B cell (primary cell): ENCODE measurements at regions of chr1 and their contacts with region 1.

Region 1: DNA sequence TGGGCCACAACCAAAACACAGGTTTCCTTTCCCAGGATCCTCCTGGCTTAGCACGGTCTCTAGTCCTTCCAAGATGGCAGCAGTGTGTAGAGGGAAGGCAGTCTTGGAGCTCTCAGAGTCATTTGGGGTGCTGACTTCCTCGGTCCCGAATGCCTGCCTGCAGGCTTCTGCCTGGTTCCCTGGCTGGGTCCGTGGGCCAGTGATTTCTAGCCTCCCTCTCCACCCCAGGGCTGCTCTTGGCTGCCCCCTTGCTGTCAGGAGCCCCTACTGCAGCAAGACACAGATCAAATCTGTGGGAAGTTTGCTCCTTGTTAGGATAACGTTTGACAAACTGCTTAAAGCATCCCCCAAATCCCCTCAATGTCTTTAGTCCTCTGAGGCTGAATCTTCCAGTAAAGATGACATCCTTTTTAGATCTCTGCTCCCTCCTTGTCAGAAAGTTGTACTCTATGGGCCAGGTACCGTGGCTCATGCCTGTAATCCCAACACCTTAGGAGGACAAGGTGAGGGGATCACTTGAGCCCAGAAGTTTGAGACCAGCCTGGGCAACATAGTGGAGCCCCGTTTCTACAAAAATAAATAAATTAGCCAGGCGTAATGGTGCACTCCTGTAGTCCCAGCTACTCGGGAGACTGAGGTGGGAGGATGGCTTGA is 272.5 kb downstream of the RRAGC start:
- DNase-seq: peak; percentile 68
- ATAC-seq: peak; percentile 91
- H3K4me3 ChIP-seq: no peak overlapping the region
- H3K4me3 Mint-ChIP-seq: peak overlapping the region; percentile 52
- H3K27ac ChIP-seq: no peak overlapping the region
- H3K27ac Mint-ChIP-seq: no peak overlapping the region
- H3K4me1 ChIP-seq: peaks cover 0 to 6% of the 10 kb centered on the region in 2 donors
- H3K4me1 Mint-ChIP-seq: peaks cover 14% of the 10 kb centered on the region
- H3K27me3 ChIP-seq: no peaks in the 10 kb centered on the region
- H3K27me3 Mint-ChIP-seq: peaks cover 12% of the 10 kb centered on the region
- CTCF ChIP-seq: peak; percentile 90

Region 2: GRCh38 chr1:38046884-38047602 is 540.1 kb before region 1 on chr1:
- CTCF ChIA-PET with region 1: no interaction called
- POLR2A ChIA-PET with region 1: no interaction called
- intact Hi-C with region 1: loop called (anchors 2 kb)
- DNase-seq: peak; percentile 86
- ATAC-seq: peak; percentile 89
- H3K4me3 ChIP-seq: peak overlapping the region in 4 of 5 experiments; percentile 43 to 68 (median 60)
- H3K4me3 Mint-ChIP-seq: peak overlapping the region; percentile 90
- H3K27ac ChIP-seq: no peak overlapping the region
- H3K27ac Mint-ChIP-seq: peak overlapping the region; percentile 53
- H3K4me1 ChIP-seq: peaks cover 24% of the 10 kb centered on the region in 2 donors
- H3K4me1 Mint-ChIP-seq: peaks cover 22% of the 10 kb centered on the region
- H3K27me3 ChIP-seq: peaks cover 0 to 44% (median 30%) of the 10 kb centered on the region in 4 experiments
- H3K27me3 Mint-ChIP-seq: peaks cover 24% of the 10 kb centered on the region
- CTCF ChIP-seq: no peak

Region 3: DNA sequence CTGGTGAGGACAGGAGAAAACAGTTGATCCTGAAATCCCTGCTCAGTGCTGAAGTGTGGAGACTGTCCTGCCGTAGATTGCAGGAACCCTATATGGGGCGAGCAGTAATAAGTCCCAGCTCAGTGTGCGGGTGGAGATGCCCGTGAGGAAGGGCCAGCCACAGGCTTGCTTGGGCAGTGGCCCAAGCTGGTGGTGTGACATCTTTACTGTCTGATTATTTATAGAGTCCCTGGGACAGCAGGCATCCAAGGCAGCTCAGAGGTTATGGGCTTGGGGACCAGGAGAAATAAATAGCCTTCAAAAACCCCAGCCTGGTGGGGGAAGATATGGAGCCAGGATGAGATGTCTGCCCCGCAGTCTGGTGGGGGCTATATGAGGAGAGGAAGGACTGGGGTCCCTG is 369.8 kb before region 1 on chr1:
- CTCF ChIA-PET with region 1: no interaction called
- POLR2A ChIA-PET with region 1: no interaction called
- intact Hi-C with region 1: loop called (anchors 5 kb)
- DNase-seq: no peak
- ATAC-seq: no peak
- H3K4me3 ChIP-seq: no peak overlapping the region
- H3K4me3 Mint-ChIP-seq: no peak overlapping the region
- H3K27ac ChIP-seq: no peak overlapping the region
- H3K27ac Mint-ChIP-seq: no peak overlapping the region
- H3K4me1 ChIP-seq: peaks cover 4 to 10% of the 10 kb centered on the region in 2 donors
- H3K4me1 Mint-ChIP-seq: peaks cover 13% of the 10 kb centered on the region
- H3K27me3 ChIP-seq: peaks cover 0 to 17% (median 2%) of the 10 kb centered on the region in 4 experiments
- H3K27me3 Mint-ChIP-seq: peaks cover 55% of the 10 kb centered on the region
- CTCF ChIP-seq: no peak

Region 4: GRCh38 chr1:38360807-38361206 is 226.3 kb before region 1 on chr1:
- CTCF ChIA-PET with region 1: no interaction called
- POLR2A ChIA-PET with region 1: no interaction called
- intact Hi-C with region 1: loop called (anchors 1 kb)
- DNase-seq: peak; percentile 17
- ATAC-seq: no peak
- H3K4me3 ChIP-seq: no peak overlapping the region
- H3K4me3 Mint-ChIP-seq: no peak overlapping the region
- H3K27ac ChIP-seq: no peak overlapping the region
- H3K27ac Mint-ChIP-seq: no peak overlapping the region
- H3K4me1 ChIP-seq: no peaks in the 10 kb centered on the region
- H3K4me1 Mint-ChIP-seq: no peaks in the 10 kb centered on the region
- H3K27me3 ChIP-seq: no peaks in the 10 kb centered on the region
- H3K27me3 Mint-ChIP-seq: no peaks in the 10 kb centered on the region
- CTCF ChIP-seq: no peak